ENCODE measurements at regions of chr7 and their contacts with region 1.

Region 1: DNA sequence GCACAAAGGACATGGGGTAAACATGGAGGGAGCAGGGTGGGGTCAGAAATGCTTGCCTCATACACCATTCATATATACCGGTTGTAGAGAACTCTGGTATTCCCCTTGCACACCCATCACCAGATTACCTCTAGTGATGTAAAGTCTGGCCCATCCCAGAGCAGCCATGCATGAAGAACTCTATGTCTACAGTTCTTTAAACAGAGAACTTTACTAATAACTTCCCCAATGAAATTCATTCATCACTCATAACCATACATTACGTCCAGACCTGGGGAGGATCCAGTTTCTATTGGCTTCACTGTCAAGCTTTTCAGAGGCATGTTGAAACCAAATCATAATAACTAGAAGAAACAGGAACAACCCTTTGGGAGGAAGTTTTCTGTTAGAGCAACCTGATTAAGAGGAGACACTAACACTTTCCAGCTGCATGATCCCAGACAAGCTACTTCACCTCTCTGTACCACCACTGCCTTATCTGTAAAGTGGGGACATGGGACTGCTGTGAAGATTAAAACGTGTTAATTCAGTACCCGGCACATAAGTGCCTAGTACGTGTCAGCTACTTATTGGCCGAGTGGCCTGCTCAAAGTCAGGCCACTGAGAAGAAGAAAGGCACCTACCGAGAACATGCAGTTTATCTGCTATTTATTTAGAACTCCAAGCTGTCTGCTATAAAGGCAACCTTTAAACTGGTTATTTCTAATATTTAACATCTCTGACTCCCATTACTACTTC is 59.7 kb downstream of the IGF2BP3 start:
- DNase-seq: no peak

Region 2: DNA sequence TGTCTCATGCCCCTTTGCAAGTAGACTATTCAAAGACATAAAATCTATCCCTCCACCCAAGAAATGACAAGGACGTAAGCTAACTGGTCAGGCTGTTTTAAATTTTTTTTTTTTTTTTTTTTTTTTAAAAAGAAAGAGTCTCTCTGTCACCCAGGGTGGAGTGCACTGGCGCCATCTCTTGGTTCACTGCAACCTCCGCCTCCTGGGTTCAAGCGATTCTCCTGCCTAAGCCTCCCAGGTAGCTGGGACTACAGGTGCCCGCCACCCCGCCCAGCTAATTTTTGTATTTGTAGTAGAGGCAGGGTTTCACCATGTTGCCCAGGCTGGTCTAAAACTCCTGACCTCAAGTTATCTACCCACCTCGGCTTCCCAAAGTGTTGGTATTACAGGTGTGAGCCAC is 110.0 kb after region 1 on chr7:
- in situ Hi-C with region 1: loop called (anchors 25 kb)
- DNase-seq: peak; percentile 72

Region 3: DNA sequence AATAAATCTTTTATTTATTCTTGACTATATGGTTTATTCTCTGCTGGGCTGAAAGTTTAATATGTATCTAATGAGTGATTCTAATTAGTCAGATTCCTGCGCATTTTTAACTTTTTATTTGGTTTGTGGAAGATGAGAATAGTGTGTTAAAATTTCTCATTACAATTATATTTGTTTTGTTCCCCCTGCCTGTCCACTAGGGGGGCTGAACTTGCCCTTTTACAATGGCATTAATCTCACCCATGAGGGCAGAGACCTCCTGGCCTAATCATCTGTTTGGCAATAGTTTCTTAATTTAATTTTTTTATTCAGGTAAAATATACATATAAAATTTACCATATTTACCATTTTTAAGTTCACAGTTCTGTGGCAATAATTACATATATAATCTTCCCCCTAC is 594.9 kb after region 1 on chr7:
- in situ Hi-C with region 1: no loop called
- DNase-seq: no peak

Measured in SK-MEL-5 (cell line).